Right ventricle myocardium inferior (tissue), 1 donor: ENCODE measurements at regions of chr11 and their contacts with region 1.

Region 1: DNA sequence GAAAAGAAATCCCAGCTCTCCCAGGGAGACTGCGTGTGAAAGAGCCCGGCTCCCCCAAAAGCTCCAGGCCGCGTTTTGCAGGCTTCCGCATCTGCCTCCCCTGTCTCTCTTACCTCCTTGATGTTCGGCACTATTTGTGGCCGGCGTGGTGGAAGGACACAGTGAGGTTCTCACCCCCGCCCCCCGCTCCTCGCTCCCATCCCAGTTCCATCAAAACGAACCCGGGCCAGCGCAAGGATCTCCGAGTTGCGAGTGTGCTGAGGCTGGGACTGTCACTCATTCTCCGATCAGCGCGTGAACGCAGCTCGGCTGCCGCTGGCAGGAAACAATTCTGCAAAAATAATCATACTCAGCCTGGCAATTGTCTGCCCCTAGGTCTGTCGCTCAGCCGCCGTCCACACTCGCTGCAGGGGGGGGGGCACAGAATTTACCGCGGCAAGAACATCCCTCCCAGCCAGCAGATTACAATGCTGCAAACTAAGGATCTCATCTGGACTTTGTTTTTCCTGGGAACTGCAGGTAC is at the start of gene NCAM1:
- DNase-seq: peak; percentile 88
- ATAC-seq: peak; percentile 76
- total RNA-seq, gene NCAM1: 250 TPM

Region 2: GRCh38 chr11:112588252-112588694 is 372.9 kb before region 1 on chr11:
- intact Hi-C with region 1: loop called (anchors 10 kb)
- DNase-seq: peak; percentile 84
- ATAC-seq: peak; percentile 82

Region 3: DNA sequence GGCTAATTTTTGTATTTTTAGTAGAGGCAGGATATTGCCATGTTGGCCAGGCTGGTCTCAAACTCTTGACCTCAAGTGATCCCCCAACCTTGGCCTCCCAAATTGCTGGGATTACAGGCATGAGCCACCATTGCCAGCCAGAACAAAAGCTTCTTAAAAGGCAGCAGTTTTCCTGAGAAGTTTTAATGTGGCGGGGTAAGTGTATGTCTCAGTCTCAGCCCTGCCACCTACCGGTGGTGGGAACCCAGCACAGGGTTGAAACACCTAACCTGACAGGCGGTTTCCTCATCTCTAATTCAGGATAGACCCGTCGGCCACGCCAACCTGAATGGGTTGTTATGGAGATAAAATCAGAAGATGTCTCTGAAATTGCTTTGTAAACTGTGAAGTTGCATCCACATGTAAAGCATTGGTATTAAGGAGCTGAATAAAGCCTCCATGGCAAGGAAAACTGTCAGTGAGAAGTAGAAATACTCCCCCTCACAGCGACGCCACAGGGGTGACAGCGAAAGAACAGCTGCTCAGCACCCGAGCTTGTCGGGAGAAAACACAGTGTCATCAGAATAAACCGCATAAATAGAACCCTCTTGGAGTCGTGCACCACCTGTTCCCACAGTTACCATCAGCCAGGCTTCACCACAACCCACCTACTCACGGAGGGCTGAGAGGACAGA is 165.9 kb before region 1 on chr11:
- intact Hi-C with region 1: loop called (anchors 5 kb)
- DNase-seq: peak; percentile 74
- ATAC-seq: peak; percentile 34

Region 4: DNA sequence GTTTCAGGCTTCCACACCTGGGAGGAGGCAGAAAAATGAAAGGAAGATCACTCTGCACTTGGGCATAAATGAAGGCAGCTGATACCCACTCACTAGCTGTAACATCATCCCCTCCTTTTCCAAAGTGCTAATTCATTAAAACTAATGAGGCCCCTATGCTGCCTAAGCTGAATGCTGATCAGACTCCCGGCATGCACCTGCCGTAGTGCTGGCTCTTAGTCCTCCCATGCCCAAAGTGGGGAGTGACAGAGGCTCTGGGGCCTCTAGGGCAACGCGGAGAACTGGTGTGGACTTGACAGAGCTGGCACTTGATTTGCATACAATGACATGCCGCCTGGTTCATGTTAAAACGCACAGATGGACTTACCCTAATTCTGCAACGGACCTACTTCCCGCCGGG is 96.5 kb before region 1 on chr11:
- intact Hi-C with region 1: loop called (anchors 5 kb)
- DNase-seq: no peak
- ATAC-seq: no peak

Region 5: DNA sequence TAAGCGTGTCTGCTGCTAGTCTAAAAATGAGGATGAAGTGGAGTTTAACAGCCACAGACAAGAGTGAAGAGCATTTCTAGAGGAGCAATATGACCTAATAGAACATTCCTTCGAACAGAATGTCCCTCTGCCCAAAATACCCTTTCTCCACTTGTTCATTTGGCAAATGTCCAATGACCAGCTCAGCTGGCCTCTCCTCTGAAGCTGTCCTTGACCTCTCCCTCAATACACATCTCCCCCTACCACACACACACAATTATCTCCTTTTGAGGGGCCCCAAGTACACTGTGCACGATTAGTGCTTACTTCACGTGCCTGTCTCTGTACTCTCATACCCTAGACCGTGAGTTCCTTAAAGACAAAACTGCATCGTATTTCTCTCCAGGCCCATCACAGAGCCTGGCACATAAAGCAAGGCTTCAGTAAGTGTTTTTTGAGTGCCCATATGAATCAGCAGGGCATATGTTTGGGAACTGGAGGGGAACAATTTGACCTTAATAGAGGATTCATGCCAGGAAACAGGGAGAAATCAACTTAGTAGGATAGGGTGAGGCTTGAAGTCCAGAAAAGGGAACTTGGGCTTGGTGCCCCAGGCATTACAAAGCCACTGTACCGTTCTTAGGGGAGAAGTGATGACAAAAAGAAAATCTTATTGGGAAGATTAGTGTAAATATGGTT is 18.1 kb before region 1 on chr11:
- intact Hi-C with region 1: no loop called
- DNase-seq: no peak
- ATAC-seq: peak; percentile 71

Region 6: GRCh38 chr11:113014262-113015097 is 53.3 kb after region 1 on chr11:
- intact Hi-C with region 1: loop called (anchors 5 kb)
- DNase-seq: peak; percentile 80
- ATAC-seq: peak; percentile 95

Region 7: DNA sequence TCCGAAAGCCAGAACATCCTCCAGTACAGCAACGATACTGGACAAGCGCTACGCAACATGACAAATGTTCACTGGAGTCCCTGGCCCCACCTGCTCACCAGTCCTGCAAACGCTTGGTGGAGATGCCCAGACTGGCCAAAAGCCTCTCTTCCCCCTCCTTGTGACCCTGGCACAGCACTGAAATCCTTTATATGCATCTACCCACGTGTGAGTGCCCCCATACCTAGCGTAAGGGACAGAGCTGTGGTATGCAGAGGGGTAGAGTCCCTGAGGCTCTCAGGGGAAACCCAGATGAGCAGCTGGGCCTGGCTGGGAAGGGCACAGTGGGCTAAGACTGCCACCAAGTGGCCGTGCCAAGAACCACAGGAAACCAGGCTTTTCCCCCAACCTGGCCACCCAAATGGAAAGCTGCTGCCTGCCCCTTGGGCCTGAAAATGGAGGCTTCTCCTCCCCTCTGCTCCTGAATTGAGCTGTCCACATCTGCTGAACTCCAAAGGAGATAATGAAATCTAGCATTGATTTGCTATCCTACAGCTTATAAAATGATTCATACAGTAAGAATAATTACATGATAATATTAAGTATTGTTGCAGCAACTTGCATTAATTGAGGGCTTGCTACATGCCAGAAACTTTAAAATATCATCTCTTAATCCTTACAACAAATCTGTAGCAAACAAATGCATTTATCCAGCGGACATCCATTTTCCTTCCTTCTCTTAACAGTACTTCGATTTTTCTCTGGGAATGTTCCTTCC is 328.4 kb after region 1 on chr11:
- intact Hi-C with region 1: loop called (anchors 10 kb)
- DNase-seq: no peak
- ATAC-seq: peak; percentile 77